Kidney (tissue), 22 donors: ENCODE measurements at regions of chr4 and their contacts with region 1.

Region 1: DNA sequence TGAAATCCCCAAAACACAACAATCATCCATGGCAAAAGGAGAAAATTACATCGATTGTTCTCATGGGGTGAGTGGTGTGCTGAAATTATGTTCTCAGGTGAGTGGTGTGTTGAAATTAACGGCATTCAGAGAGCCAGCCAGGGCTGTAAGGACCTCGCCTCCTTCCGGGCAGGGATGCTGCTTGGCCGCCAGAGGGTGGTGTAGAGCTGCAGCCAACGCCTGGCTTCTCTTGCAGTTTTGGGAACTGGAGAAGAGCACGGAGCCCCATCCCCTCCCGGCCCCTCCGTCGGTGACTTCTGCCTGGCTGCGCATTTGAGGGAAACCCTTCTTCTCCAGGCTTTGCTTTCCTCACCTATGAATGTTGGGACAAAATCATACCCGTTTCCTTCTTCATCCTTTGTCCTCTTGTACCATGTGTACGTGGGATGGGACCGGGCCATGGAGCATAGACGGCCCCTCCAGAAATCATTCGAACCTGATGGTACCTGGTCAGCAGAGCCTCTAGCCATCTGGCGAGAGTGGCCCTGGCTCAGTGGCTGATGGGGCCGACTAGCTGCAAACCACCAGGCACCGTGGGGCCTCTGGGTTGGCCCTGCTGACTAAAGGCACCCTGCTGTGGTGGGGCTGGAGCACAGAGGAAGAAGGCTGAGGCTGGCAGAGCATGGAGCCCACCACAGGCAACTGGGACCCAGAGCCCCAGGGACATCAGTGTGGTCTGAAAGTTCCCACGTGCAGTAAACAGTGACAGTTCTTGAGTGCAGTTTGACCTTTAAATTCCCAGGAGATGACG is 28.4 kb downstream of the TRMT44 start:
- DNase-seq: peak; percentile 78 to 87 (median 81)
- H3K4me3 ChIP-seq: no peak overlapping the region
- H3K27ac ChIP-seq: no peak overlapping the region
- H3K4me1 ChIP-seq: peaks cover 4 to 14% (median 5%) of the 10 kb centered on the region in 3 donors
- H3K27me3 ChIP-seq: no peaks in the 10 kb centered on the region
- CTCF ChIP-seq: peak; percentile 79

Region 2: DNA sequence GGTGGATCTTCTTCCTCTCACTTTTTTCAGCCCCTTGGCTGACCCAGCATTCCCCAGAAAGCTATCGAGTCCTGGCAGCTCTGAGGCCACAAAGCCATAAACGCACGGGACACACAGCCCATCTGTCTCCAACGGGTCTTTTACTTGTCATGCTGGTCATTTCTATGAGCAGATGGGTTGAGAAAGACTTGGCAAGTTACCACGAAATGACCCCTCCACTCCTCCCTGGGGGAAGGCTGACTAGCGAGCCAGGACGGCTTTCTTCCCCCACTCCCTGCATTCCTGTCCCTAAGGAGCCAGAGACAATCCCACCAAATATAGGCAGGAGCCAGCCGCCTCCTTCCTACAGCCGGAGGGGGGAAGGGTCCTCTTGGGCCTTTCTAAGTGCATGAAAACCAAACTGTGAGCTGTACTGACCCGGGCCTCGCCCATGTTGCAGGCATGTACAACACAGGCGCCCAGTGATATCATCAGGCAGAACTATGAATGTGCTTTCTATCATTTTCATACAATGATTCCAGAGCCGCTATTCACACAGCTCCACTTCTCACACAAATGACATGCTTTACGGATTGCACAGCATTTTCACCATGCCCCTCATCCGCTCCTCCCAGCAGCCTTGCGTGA is 557.9 kb before region 1 on chr4:
- intact Hi-C with region 1: no loop called
- DNase-seq: peak; percentile 59 to 84 (median 71)
- H3K4me3 ChIP-seq: no peak overlapping the region
- H3K27ac ChIP-seq: no peak overlapping the region
- H3K4me1 ChIP-seq: peaks cover 0 to 3% (median 0%) of the 10 kb centered on the region in 3 donors
- H3K27me3 ChIP-seq: no peaks in the 10 kb centered on the region
- CTCF ChIP-seq: no peak

Region 3: DNA sequence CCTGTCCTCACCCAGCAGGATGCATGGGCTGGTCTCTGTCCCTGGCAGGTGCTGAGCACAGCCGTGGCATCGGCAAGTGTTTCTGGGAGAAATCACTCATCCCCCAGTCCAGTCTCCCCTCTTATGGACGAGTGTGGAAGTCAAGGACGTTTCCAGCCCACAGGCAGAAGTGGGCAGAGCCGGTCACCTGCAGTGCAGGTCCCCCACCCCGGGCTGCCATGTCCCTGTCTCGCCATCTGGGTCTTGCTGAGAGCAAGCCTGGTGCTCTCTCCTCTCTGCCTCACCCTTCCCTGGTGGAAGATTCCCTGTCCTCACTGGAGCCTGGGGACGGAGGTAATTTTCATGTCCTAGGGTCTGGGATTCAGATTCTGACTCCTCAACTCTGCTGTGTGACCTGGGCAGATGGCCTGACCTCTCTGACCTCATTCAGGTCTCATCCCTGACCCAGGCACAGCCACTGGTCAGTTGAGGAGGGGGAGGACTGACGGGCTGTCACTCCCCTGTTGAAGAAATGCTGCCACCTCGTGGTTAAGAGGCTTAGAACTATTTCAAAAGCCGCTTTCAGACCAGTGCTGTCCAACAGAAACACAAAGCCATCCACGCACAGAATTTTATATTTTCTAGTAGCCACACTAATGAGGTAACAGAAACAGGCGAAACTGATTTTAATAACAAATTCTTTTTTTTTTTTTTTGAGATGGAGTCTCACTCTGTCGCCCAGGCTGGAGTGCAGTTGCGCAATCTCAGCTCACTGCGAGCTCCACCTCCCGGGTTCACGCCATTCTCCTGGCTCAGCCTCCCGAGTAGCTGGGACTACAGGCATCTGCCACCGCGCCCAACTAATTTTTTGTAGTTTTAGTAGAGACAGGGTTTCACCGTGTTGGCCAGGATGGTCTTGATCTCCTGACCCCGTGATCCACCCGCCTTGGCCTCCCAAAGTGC is 125.4 kb after region 1 on chr4:
- intact Hi-C with region 1: loop called (anchors 5 kb)
- DNase-seq: peak; percentile 55 to 91 (median 81)
- H3K4me3 ChIP-seq: no peak overlapping the region
- H3K27ac ChIP-seq: no peak overlapping the region
- H3K4me1 ChIP-seq: peaks cover 0 to 5% (median 0%) of the 10 kb centered on the region in 3 donors
- H3K27me3 ChIP-seq: peaks cover 3% of the 10 kb centered on the region
- CTCF ChIP-seq: peak; percentile 76